T-cell (primary cell): ENCODE measurements at regions of chr17 and their contacts with region 1.

Region 1: DNA sequence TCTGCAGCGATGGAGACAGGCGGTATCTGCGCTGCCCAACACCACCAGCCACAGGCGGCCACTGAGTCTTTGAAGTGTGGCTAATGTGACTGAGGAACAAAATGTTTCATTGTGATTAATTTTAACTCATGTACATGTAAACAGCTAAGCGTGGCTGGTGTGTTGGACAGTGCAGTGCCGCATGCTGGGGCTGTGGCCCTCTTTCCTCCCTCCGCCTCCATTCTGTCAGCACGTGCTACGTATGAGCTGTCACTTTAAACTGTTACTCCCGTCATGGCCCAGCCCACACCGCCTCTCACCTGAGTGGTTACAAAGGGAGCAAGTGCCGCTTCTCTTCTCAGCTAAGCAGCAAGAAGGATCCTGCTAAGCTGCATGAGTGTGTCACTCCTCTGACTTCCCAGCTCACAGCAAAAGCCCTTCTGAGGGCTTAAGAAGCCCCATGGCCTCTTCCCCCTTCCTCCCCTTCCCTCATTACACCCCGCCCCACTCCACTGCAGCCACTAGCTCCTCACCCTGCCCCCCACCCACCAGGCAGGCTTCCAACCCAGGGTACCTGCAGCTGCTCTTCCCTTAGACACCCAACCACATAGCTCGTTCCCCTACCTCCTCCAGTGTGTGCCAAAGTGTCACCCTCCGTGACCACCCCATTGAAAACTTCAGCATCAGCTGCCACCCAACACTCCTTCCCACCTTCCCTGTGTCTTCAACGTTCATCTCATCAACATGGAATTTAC is 15.0 kb downstream of the HASPIN start:
- DNase-seq: peak in 33 of 35 experiments; percentile 32 to 75 (median 51)
- ATAC-seq: peak; percentile 75 to 85 (median 81)
- H3K4me3 ChIP-seq: no peak overlapping the region
- H3K4me3 Mint-ChIP-seq: peak overlapping the region in 2 of 3 donors; percentile 36 to 52
- H3K27ac ChIP-seq: peak overlapping the region; percentile 34
- H3K27ac Mint-ChIP-seq: peak overlapping the region; percentile 66 to 79
- H3K4me1 ChIP-seq: peaks cover 11 to 41% of the 10 kb centered on the region in 2 experiments
- H3K4me1 Mint-ChIP-seq: peaks cover 34 to 46% (median 38%) of the 10 kb centered on the region in 3 donors
- H3K27me3 ChIP-seq: no peaks in the 10 kb centered on the region
- H3K27me3 Mint-ChIP-seq: no peaks in the 10 kb centered on the region

Region 2: DNA sequence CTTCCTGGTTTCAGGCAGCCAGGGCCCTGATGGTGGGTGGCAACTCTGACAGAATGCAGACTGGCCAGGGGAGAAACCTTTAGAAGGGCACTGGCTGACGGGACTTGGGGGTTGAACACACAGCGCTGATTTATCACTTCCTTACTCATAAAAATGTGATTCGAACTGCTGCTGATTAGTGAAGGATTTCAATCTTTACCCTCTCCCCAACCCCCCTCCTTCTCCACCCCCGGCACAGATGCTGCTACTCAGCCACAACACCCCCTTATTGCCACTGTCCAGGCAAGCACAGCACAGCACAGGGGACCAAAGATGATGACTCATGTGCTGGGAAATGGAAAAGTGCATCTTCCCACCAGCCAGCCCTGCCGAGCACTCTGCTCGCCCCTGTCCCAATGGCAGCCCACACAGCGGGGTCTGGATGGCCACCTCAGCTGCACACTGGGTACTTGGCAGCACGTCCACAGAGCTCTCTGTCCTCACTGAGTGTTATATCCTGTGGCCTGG is 1505.2 kb before region 1 on chr17:
- CTCF ChIA-PET with region 1: no interaction called
- POLR2A ChIA-PET with region 1: no interaction called
- DNase-seq: no peak
- ATAC-seq: no peak
- H3K4me3 ChIP-seq: no peak overlapping the region
- H3K4me3 Mint-ChIP-seq: no peak overlapping the region
- H3K27ac ChIP-seq: no peak overlapping the region
- H3K27ac Mint-ChIP-seq: no peak overlapping the region
- H3K4me1 ChIP-seq: peaks cover 0 to 2% of the 10 kb centered on the region in 2 experiments
- H3K4me1 Mint-ChIP-seq: peaks cover 14 to 22% (median 20%) of the 10 kb centered on the region in 3 donors
- H3K27me3 ChIP-seq: no peaks in the 10 kb centered on the region
- H3K27me3 Mint-ChIP-seq: no peaks in the 10 kb centered on the region

Region 3: DNA sequence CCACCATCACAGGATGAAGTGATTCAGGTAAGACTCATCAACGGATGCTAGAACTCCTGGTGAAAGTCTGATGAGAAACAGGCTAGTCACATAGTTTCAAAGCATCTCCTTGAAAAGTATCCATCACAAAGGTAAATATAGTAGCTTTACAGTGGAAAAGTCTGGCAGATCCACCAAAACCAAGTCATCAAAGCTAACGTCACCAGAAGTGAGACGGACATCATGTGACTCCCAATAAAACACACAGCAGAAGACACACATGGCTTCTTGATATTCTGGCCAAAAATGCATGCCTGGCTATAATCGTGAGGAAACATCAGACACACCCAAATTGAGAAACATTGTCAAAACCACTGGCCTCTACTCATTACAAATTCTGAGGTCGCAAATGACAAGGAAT is 163.2 kb before region 1 on chr17:
- CTCF ChIA-PET with region 1: no interaction called
- POLR2A ChIA-PET with region 1: no interaction called
- DNase-seq: no peak
- ATAC-seq: no peak
- H3K4me3 ChIP-seq: no peak overlapping the region
- H3K4me3 Mint-ChIP-seq: no peak overlapping the region
- H3K27ac ChIP-seq: no peak overlapping the region
- H3K27ac Mint-ChIP-seq: no peak overlapping the region
- H3K4me1 ChIP-seq: no peaks in the 10 kb centered on the region
- H3K4me1 Mint-ChIP-seq: no peaks in the 10 kb centered on the region
- H3K27me3 ChIP-seq: no peaks in the 10 kb centered on the region
- H3K27me3 Mint-ChIP-seq: no peaks in the 10 kb centered on the region

Region 4: GRCh38 chr17:3710951-3711383 is 27.8 kb before region 1 on chr17:
- CTCF ChIA-PET with region 1: interaction called in 1 of 2 experiments, 3 read pairs
- POLR2A ChIA-PET with region 1: interaction called in 1 of 2 experiments, 17 read pairs
- DNase-seq: peak; percentile 27 to 93 (median 70)
- ATAC-seq: peak; percentile 98 to 99 (median 98)
- H3K4me3 ChIP-seq: no peak overlapping the region
- H3K4me3 Mint-ChIP-seq: peak overlapping the region; percentile 6 to 56 (median 18)
- H3K27ac ChIP-seq: peak overlapping the region; percentile 48
- H3K27ac Mint-ChIP-seq: peak overlapping the region; percentile 88 to 90
- H3K4me1 ChIP-seq: peaks cover 10 to 39% of the 10 kb centered on the region in 2 experiments
- H3K4me1 Mint-ChIP-seq: peaks cover 35 to 48% (median 42%) of the 10 kb centered on the region in 3 donors
- H3K27me3 ChIP-seq: no peaks in the 10 kb centered on the region
- H3K27me3 Mint-ChIP-seq: no peaks in the 10 kb centered on the region

Region 5: GRCh38 chr17:3777366-3778120 is 38.8 kb after region 1 on chr17:
- CTCF ChIA-PET with region 1: no interaction called
- POLR2A ChIA-PET with region 1: no interaction called
- DNase-seq: no peak
- ATAC-seq: no peak
- H3K4me3 ChIP-seq: no peak overlapping the region
- H3K4me3 Mint-ChIP-seq: no peak overlapping the region
- H3K27ac ChIP-seq: no peak overlapping the region
- H3K27ac Mint-ChIP-seq: no peak overlapping the region
- H3K4me1 ChIP-seq: peaks cover 0 to 4% of the 10 kb centered on the region in 2 experiments
- H3K4me1 Mint-ChIP-seq: peaks cover 3 to 4% (median 4%) of the 10 kb centered on the region in 3 donors
- H3K27me3 ChIP-seq: no peaks in the 10 kb centered on the region
- H3K27me3 Mint-ChIP-seq: no peaks in the 10 kb centered on the region

Region 6: GRCh38 chr17:3796110-3796821 is 57.5 kb after region 1 on chr17:
- CTCF ChIA-PET with region 1: interaction called in 1 of 2 experiments, 10 read pairs
- POLR2A ChIA-PET with region 1: no interaction called
- DNase-seq: peak; percentile 45 to 88 (median 73)
- ATAC-seq: peak; percentile 75 to 84 (median 78)
- H3K4me3 ChIP-seq: no peak overlapping the region
- H3K4me3 Mint-ChIP-seq: peak overlapping the region; percentile 3 to 26 (median 17)
- H3K27ac ChIP-seq: peak overlapping the region; percentile 64
- H3K27ac Mint-ChIP-seq: peak overlapping the region; percentile 65 to 79
- H3K4me1 ChIP-seq: peaks cover 3 to 45% of the 10 kb centered on the region in 2 experiments
- H3K4me1 Mint-ChIP-seq: peaks cover 25 to 54% (median 40%) of the 10 kb centered on the region in 3 donors
- H3K27me3 ChIP-seq: no peaks in the 10 kb centered on the region
- H3K27me3 Mint-ChIP-seq: no peaks in the 10 kb centered on the region

Region 7: DNA sequence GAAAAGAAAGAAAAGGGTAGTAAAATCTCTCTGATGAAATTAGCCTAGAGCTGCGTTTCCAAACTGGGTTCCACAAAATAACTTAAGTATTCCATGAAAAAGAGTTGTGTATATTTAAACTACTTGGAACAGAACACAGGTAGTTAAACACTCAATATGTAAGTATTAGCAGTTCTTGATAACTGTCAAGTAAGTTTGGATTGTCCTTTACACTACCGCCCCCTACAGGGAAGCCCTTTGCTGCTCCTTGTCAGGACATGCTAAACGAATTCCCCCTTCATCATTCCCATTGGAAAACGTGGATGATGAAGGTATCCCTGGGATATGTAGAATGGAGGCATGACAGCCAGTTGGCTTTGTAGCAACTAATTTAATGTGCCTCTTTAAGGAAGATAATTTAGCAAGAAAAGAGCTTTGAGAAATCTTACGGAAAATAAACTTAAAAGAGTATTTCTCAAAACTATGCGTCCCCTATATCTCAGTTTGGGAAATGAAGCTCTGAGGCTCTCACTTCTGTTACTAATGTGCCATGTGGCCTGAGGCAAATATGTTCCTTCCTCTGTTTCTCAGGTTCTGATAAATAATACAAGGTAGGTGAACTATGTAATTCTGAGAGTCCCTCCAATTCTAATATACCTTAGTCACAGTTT is 88.5 kb after region 1 on chr17:
- CTCF ChIA-PET with region 1: interaction called, 29 to 109 read pairs
- POLR2A ChIA-PET with region 1: interaction called, 4 to 10 read pairs
- DNase-seq: peak; percentile 24 to 86 (median 63)
- ATAC-seq: peak in 2 of 4 experiments; percentile 56 to 62
- H3K4me3 ChIP-seq: no peak overlapping the region
- H3K4me3 Mint-ChIP-seq: no peak overlapping the region
- H3K27ac ChIP-seq: no peak overlapping the region
- H3K27ac Mint-ChIP-seq: no peak overlapping the region
- H3K4me1 ChIP-seq: no peaks in the 10 kb centered on the region
- H3K4me1 Mint-ChIP-seq: peaks cover 3 to 8% (median 7%) of the 10 kb centered on the region in 3 donors
- H3K27me3 ChIP-seq: no peaks in the 10 kb centered on the region
- H3K27me3 Mint-ChIP-seq: no peaks in the 10 kb centered on the region

Region 8: DNA sequence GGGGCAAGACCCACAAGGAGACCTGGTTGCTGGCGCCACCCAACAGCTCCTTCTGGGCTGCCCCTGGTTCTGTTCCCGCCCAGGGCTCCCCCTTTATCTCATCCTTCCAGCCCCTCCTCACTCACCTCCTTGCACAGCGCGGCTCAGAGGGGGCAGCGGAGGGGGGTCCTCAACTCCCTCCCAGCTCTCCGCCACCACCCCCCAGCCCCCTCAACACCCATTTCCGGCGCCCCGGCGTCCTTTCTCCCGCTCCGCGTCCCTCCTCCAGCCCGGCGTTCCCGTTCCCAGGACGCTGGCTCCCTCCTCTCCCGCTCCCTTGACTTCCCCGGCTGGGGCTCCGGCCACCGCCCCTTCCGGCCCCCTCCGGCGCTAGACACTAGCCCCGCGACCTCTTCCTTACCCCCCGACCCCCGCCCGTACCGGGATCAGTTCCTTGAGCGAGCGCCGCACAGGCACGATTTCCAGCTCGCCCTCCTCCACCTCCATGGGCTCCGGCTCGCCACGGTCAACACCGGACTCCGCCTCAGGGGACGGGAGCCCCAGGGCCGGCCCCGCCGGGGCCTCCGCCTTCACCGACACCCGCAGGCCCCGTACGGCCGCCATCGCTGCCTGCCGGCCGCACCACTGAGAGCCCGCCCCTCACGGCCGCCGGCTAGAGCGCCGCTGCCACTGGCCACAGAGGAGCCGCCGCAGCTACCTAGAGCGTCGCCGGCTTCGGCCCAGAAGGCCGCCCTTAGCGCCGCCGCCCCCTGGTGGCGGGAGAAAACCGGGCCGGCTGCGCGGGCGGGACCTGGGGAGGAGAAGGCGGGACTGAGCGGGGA is 107.1 kb after region 1 on chr17 and contains the start of gene NCBP3:
- CTCF ChIA-PET with region 1: interaction called in 1 of 2 experiments, 42 read pairs
- POLR2A ChIA-PET with region 1: no interaction called
- DNase-seq: peak; percentile 75 to 97 (median 86)
- ATAC-seq: peak; percentile 95 to 98 (median 97)
- H3K4me3 ChIP-seq: peak within 1 kb of the TSS; percentile 74 to 100
- H3K4me3 Mint-ChIP-seq: peak within 1 kb of the TSS; percentile 90 to 92 (median 90)
- H3K27ac ChIP-seq: peak within 1 kb of the TSS; percentile 76
- H3K27ac Mint-ChIP-seq: peak within 1 kb of the TSS; percentile 81 to 84
- H3K4me1 ChIP-seq: peaks cover 11 to 37% of the 10 kb centered on the region in 2 experiments
- H3K4me1 Mint-ChIP-seq: peaks cover 26 to 31% (median 27%) of the 10 kb centered on the region in 3 donors
- H3K27me3 ChIP-seq: peaks cover 0 to 2% of the 10 kb centered on the region in 2 experiments
- H3K27me3 Mint-ChIP-seq: no peaks in the 10 kb centered on the region
- total RNA-seq, gene NCBP3: 35.6 to 55.5 (median 46.7) TPM